Naive thymus-derived CD4-positive, alpha-beta T cell (primary cell): ENCODE measurements at regions of chr3 and their contacts with region 1.

Region 1: GRCh38 chr3:160754855-160755747 is 930 bp upstream of the PPM1L start:
- DNase-seq: peak; percentile 76 to 88 (median 85)
- ATAC-seq: peak; percentile 92
- H3K4me3 ChIP-seq: peak overlapping the region; percentile 73
- H3K4me3 Mint-ChIP-seq: peak overlapping the region; percentile 88 to 99 (median 96)
- H3K27ac ChIP-seq: peak overlapping the region; percentile 69
- H3K27ac Mint-ChIP-seq: peak overlapping the region; percentile 88 to 97 (median 94)
- H3K4me1 ChIP-seq: peaks cover 10 to 11% of the 10 kb centered on the region in 2 donors
- H3K4me1 Mint-ChIP-seq: peaks cover 27 to 36% (median 30%) of the 10 kb centered on the region in 7 donors
- H3K27me3 ChIP-seq: peaks cover 0 to 6% of the 10 kb centered on the region in 2 donors
- H3K27me3 Mint-ChIP-seq: peaks cover 5 to 41% (median 10%) of the 10 kb centered on the region in 5 donors

Region 2: GRCh38 chr3:158801696-158802408 is 1953.2 kb before region 1 on chr3 and contains the start of gene MFSD1:
- CTCF ChIA-PET with region 1: no interaction called
- POLR2A ChIA-PET with region 1: no interaction called
- intact Hi-C with region 1: loop called in 1 of 2 experiments (anchors 10 kb)
- DNase-seq: peak; percentile 73 to 91 (median 83)
- ATAC-seq: peak; percentile 94
- H3K4me3 ChIP-seq: peak within 1 kb of the TSS; percentile 88
- H3K4me3 Mint-ChIP-seq: peak within 1 kb of the TSS; percentile 84 to 93 (median 90)
- H3K27ac ChIP-seq: peak within 1 kb of the TSS; percentile 76
- H3K27ac Mint-ChIP-seq: peak within 1 kb of the TSS; percentile 58 to 98 (median 92)
- H3K4me1 ChIP-seq: peaks cover 9 to 11% of the 10 kb centered on the region in 2 donors
- H3K4me1 Mint-ChIP-seq: peaks cover 24 to 50% (median 43%) of the 10 kb centered on the region in 7 donors
- H3K27me3 ChIP-seq: no peaks in the 10 kb centered on the region
- H3K27me3 Mint-ChIP-seq: peaks cover 0 to 24% (median 0%) of the 10 kb centered on the region in 5 donors
- total RNA-seq, gene MFSD1: 24.6 to 66.0 (median 31.1) TPM

Region 3: DNA sequence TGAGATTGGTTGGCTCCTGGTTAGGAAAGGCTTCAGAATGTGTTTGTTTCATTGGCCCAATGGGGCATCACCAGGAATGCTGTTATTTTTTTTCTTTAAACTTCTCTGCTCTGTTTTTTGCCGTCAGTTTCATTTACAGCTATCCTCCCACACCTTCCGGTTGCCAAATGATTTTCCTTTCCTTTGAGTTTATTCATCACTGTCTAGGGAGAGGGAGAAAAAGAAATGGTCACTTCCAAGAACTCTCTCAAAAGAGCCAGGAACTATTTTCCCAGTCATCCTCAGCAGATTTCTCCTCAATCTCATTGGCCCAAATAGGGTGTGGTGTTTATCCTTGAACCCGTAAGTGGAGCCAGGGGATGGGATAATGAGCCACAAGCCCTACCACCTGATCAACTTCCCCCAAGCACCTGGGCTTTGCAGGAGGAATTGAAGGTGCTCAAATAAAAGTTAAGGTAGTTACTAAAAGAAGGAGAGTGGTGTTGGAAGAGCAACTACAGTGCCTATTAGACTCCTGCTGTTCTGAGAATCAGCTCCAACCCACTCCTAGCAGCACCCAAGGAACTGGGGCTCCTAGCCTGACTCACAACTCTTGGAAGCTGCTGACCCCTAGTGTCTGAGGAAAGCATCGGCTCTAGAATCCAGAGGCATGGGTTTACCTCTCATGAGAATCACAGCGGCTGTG is 950.2 kb before region 1 on chr3:
- CTCF ChIA-PET with region 1: no interaction called
- POLR2A ChIA-PET with region 1: no interaction called
- intact Hi-C with region 1: no loop called
- DNase-seq: peak in 1 of 9 donors; percentile 8
- ATAC-seq: peak; percentile 48
- H3K4me3 ChIP-seq: no peak overlapping the region
- H3K4me3 Mint-ChIP-seq: no peak overlapping the region
- H3K27ac ChIP-seq: no peak overlapping the region
- H3K27ac Mint-ChIP-seq: no peak overlapping the region
- H3K4me1 ChIP-seq: no peaks in the 10 kb centered on the region
- H3K4me1 Mint-ChIP-seq: no peaks in the 10 kb centered on the region
- H3K27me3 ChIP-seq: no peaks in the 10 kb centered on the region
- H3K27me3 Mint-ChIP-seq: peaks cover 0 to 17% (median 9%) of the 10 kb centered on the region in 5 donors

Region 4: GRCh38 chr3:160801386-160802118 is 46.5 kb after region 1 on chr3:
- CTCF ChIA-PET with region 1: no interaction called
- POLR2A ChIA-PET with region 1: no interaction called
- intact Hi-C with region 1: loop called in 1 of 2 experiments (anchors 1 kb)
- DNase-seq: peak in 7 of 9 donors; percentile 1 to 59 (median 10)
- ATAC-seq: peak; percentile 87
- H3K4me3 ChIP-seq: no peak overlapping the region
- H3K4me3 Mint-ChIP-seq: peak overlapping the region in 8 of 10 donors; percentile 7 to 67 (median 54)
- H3K27ac ChIP-seq: no peak overlapping the region
- H3K27ac Mint-ChIP-seq: peak overlapping the region in 4 of 9 donors; percentile 10 to 92 (median 72)
- H3K4me1 ChIP-seq: peaks cover 0 to 5% of the 10 kb centered on the region in 2 donors
- H3K4me1 Mint-ChIP-seq: peaks cover 0 to 26% (median 10%) of the 10 kb centered on the region in 7 donors
- H3K27me3 ChIP-seq: no peaks in the 10 kb centered on the region
- H3K27me3 Mint-ChIP-seq: peaks cover 0 to 11% (median 7%) of the 10 kb centered on the region in 5 donors

Region 5: GRCh38 chr3:161220850-161221753 is 466.0 kb after region 1 on chr3 and contains the start of gene NMD3:
- CTCF ChIA-PET with region 1: no interaction called
- POLR2A ChIA-PET with region 1: no interaction called
- intact Hi-C with region 1: loop called (anchors 1 kb)
- DNase-seq: peak; percentile 84 to 92 (median 89)
- ATAC-seq: peak; percentile 98
- H3K4me3 ChIP-seq: peak within 1 kb of the TSS; percentile 86
- H3K4me3 Mint-ChIP-seq: peak within 1 kb of the TSS; percentile 87 to 96 (median 93)
- H3K27ac ChIP-seq: peak within 1 kb of the TSS; percentile 97
- H3K27ac Mint-ChIP-seq: peak within 1 kb of the TSS; percentile 89 to 98 (median 94)
- H3K4me1 ChIP-seq: peaks cover 18 to 21% of the 10 kb centered on the region in 2 donors
- H3K4me1 Mint-ChIP-seq: peaks cover 12 to 52% (median 36%) of the 10 kb centered on the region in 7 donors
- H3K27me3 ChIP-seq: no peaks in the 10 kb centered on the region
- H3K27me3 Mint-ChIP-seq: peaks cover 4 to 22% (median 11%) of the 10 kb centered on the region in 5 donors
- total RNA-seq, gene NMD3: 37.3 to 52.6 (median 40.7) TPM